Right cardiac atrium (tissue), 5 donors: ENCODE measurements at regions of chrX and their contacts with region 1.

Region 1: GRCh38 chrX:33336783-33337182 is 125.4 kb upstream of the DMD start:
- DNase-seq: no peak
- ATAC-seq: no peak
- H3K4me3 ChIP-seq: no peak overlapping the region
- H3K27ac ChIP-seq: no peak overlapping the region
- H3K4me1 ChIP-seq: no peaks in the 10 kb centered on the region
- H3K27me3 ChIP-seq: no peaks in the 10 kb centered on the region

Region 2: DNA sequence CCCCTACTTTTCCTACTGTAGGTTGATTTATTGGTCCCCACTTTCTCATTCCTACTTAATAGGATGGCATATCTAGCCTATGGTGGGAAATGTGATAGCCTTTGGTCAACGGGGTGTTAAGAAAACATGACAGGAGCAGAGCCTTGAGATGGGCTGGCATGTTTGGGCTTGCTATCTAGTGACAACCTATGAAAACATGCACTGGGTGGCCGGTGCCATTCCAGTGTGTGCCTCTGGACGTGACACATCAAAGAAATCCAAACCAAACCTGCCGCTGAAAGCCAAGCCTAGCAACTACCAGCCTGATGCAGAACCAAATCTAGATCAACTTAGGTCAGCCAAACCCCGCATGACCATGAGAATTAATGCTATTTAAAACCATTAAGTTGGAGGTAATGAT is 443.0 kb before region 1 on chrX:
- intact Hi-C with region 1: no loop called
- DNase-seq: no peak
- ATAC-seq: no peak
- H3K4me3 ChIP-seq: no peak overlapping the region
- H3K27ac ChIP-seq: no peak overlapping the region
- H3K4me1 ChIP-seq: peaks cover 1% of the 10 kb centered on the region
- H3K27me3 ChIP-seq: no peaks in the 10 kb centered on the region

Region 3: DNA sequence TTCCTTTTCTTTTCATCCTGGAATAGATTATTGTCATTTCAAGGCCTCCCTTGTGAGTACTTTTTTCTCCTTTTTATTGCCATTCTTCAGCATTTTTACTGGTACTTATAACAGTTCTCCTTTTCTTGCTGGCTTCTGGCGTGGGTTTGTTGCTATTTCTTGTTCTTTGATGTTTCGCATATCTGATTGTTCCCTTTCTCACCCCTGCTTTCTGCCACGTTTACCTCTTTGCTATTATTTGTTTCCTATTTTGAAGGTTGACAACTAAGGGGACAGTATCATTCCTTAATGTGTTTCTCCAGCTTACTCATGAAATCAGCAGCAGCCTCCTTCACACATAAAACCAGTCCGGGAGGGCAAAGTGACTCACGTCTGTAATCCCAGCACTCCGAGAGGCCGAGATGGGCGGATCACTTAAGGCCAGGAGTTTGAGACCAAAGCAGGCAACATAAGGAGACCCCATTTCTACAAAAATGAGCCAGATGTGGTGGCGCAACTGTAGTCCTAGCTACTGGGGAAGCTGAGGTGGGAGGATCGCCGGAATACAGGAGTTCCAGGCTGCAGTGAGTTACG is 198.0 kb before region 1 on chrX:
- intact Hi-C with region 1: no loop called
- DNase-seq: no peak
- ATAC-seq: no peak
- H3K4me3 ChIP-seq: no peak overlapping the region
- H3K27ac ChIP-seq: no peak overlapping the region
- H3K4me1 ChIP-seq: peaks cover 2% of the 10 kb centered on the region
- H3K27me3 ChIP-seq: no peaks in the 10 kb centered on the region

Region 4: GRCh38 chrX:33194876-33195433 is 141.8 kb before region 1 on chrX:
- intact Hi-C with region 1: loop called in 1 of 4 experiments (anchors 10 kb)
- DNase-seq: no peak
- ATAC-seq: peak; percentile 37 to 55
- H3K4me3 ChIP-seq: peak overlapping the region; percentile 25
- H3K27ac ChIP-seq: peak overlapping the region; percentile 68
- H3K4me1 ChIP-seq: peaks cover 3% of the 10 kb centered on the region
- H3K27me3 ChIP-seq: no peaks in the 10 kb centered on the region

Region 5: GRCh38 chrX:33686105-33686504 is 349.3 kb after region 1 on chrX:
- intact Hi-C with region 1: no loop called
- DNase-seq: no peak
- ATAC-seq: no peak
- H3K4me3 ChIP-seq: no peak overlapping the region
- H3K27ac ChIP-seq: no peak overlapping the region
- H3K4me1 ChIP-seq: no peaks in the 10 kb centered on the region
- H3K27me3 ChIP-seq: no peaks in the 10 kb centered on the region